ENCODE measurements at regions of chr22 and their contacts with region 1.

Region 1: GRCh38 chr22:41091132-41092022 is 1.0 kb upstream of the EP300 start:
- DNase-seq: peak; percentile 99
- H3K4me3 ChIP-seq: peak overlapping the region; percentile 86 to 94 (median 91)
- H3K27ac ChIP-seq: peak overlapping the region; percentile 96 to 98
- H3K4me1 ChIP-seq: peaks cover 23 to 36% (median 30%) of the 10 kb centered on the region in 4 experiments
- H3K27me3 ChIP-seq: no peaks in the 10 kb centered on the region

Region 2: GRCh38 chr22:40950962-40951794 is 140.2 kb before region 1 on chr22 and contains the start of gene RBX1:
- CTCF ChIA-PET with region 1: interaction called, 18 read pairs
- POLR2A ChIA-PET with region 1: interaction called, 27 read pairs
- DNase-seq: peak; percentile 98 to 99 (median 99)
- H3K4me3 ChIP-seq: peak within 1 kb of the TSS; percentile 81 to 97 (median 91)
- H3K27ac ChIP-seq: peak within 1 kb of the TSS; percentile 79 to 92
- H3K4me1 ChIP-seq: peaks cover 8 to 30% (median 14%) of the 10 kb centered on the region in 4 experiments
- H3K27me3 ChIP-seq: no peaks in the 10 kb centered on the region

Region 3: GRCh38 chr22:41022470-41023298 is 68.7 kb before region 1 on chr22:
- CTCF ChIA-PET with region 1: no interaction called
- POLR2A ChIA-PET with region 1: interaction called, 17 read pairs
- DNase-seq: peak; percentile 74 to 91 (median 84)
- H3K4me3 ChIP-seq: peak overlapping the region; percentile 48 to 80 (median 61)
- H3K27ac ChIP-seq: peak overlapping the region; percentile 25 to 64
- H3K4me1 ChIP-seq: peaks cover 0 to 22% (median 17%) of the 10 kb centered on the region in 4 experiments
- H3K27me3 ChIP-seq: no peaks in the 10 kb centered on the region